ENCODE measurements at regions of chr19 and their contacts with region 1.

Region 1: GRCh38 chr19:3544742-3545668 is 6.0 kb downstream of the TEKTIP1 start:
- DNase-seq: peak; percentile 81 to 95
- ATAC-seq: peak; percentile 76
- H3K4me3 ChIP-seq: no peak overlapping the region
- H3K27ac ChIP-seq: no peak overlapping the region
- H3K4me1 ChIP-seq: no peaks in the 10 kb centered on the region
- H3K27me3 ChIP-seq: no peaks in the 10 kb centered on the region

Region 2: GRCh38 chr19:3655402-3656072 is 110.5 kb after region 1 on chr19:
- intact Hi-C with region 1: loop called in 1 of 2 experiments (anchors 1 kb)
- DNase-seq: no peak
- ATAC-seq: no peak
- H3K4me3 ChIP-seq: no peak overlapping the region
- H3K27ac ChIP-seq: no peak overlapping the region
- H3K4me1 ChIP-seq: no peaks in the 10 kb centered on the region
- H3K27me3 ChIP-seq: no peaks in the 10 kb centered on the region

Region 3: GRCh38 chr19:3708208-3708931 is 163.4 kb after region 1 on chr19 and contains the start of gene TJP3:
- intact Hi-C with region 1: loop called in 1 of 2 experiments (anchors 5 kb)
- DNase-seq: no peak
- ATAC-seq: no peak
- H3K4me3 ChIP-seq: no peak within 1 kb of the TSS
- H3K27ac ChIP-seq: no peak within 1 kb of the TSS
- H3K4me1 ChIP-seq: no peaks in the 10 kb centered on the region
- H3K27me3 ChIP-seq: no peaks in the 10 kb centered on the region
- total RNA-seq, gene TJP3: 0.26 to 0.60 TPM

Region 4: DNA sequence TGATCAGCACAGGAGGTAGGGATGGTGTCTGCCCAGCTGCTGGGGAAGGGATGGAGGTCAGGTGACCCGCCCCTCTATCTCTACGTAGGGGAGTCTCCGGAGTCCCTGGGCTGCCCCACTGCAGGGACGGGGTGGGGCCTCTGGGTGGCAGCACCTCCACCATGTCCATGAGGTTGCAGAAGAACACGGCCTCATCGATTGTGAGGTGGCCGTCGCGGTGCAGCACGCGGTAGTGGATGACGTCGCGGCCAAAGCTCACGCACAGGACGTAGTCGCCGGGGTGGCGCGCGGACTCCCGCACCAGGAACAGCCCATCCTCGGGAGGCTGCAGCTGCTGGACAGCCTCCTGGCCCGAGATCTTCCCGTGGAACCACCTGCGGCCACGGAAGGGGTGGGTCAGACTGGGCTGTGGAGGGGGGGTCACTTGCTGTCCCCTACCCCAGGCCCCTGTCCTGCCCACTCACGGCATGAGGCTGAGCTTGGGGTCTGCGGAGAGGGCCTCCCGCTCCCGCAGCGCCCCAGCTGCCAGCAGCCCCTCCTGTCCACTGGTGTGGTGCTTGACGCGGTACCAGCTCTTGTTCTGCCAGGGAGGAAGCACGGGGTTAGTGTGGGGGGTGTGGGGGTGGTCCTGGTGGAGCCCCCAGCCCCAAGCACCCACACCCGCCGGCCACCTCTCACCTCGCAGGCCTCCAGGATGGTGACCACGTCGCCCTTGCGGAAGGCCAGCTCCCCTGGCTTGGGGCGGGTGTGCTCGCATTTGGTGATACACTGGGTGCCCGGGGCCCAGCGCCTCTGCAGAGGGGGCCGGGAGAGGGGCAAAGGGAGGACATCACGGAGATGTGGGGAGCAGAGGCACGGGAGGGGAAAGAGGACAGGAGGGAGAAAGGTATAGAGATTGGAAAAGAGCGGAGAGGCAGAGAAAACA is 238.9 kb after region 1 on chr19:
- intact Hi-C with region 1: no loop called
- DNase-seq: no peak
- ATAC-seq: no peak
- H3K4me3 ChIP-seq: no peak overlapping the region
- H3K27ac ChIP-seq: no peak overlapping the region
- H3K4me1 ChIP-seq: no peaks in the 10 kb centered on the region
- H3K27me3 ChIP-seq: peaks cover 0 to 2% of the 10 kb centered on the region in 2 donors

Measured in aorta (tissue), 5 donors.